HepG2 (cell line): ENCODE measurements at regions of chr12 and their contacts with region 1.

Region 1: DNA sequence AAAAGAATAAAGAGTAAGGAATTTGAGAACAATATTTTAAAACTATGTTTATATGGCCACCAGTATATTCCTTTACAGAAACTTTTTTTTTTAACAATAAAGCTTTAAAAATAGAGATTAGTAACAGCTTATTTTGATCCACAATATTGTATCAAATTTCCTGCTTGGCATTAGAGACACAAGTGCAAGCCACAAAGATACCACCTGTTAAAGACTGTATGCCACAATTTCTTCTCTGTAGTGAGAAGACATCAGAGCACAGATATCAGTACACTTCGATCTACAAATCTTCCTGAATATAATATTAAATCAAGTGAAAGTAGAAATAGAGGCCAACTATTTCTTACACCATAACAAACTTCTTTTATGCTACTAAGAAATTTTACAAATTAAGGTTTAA is 68.0 kb downstream of the GALNT4 start:
- DNase-seq: no peak
- ATAC-seq: no peak
- H3K4me3 ChIP-seq: no peak overlapping the region
- H3K27ac ChIP-seq: no peak overlapping the region
- H3K4me1 ChIP-seq: peaks cover 14% of the 10 kb centered on the region
- H3K27me3 ChIP-seq: no peaks in the 10 kb centered on the region
- CTCF ChIP-seq: no peak
- EP300 ChIP-seq: no peak
- POLR2A ChIP-seq: no peak
- RAD21 ChIP-seq: no peak

Region 2: DNA sequence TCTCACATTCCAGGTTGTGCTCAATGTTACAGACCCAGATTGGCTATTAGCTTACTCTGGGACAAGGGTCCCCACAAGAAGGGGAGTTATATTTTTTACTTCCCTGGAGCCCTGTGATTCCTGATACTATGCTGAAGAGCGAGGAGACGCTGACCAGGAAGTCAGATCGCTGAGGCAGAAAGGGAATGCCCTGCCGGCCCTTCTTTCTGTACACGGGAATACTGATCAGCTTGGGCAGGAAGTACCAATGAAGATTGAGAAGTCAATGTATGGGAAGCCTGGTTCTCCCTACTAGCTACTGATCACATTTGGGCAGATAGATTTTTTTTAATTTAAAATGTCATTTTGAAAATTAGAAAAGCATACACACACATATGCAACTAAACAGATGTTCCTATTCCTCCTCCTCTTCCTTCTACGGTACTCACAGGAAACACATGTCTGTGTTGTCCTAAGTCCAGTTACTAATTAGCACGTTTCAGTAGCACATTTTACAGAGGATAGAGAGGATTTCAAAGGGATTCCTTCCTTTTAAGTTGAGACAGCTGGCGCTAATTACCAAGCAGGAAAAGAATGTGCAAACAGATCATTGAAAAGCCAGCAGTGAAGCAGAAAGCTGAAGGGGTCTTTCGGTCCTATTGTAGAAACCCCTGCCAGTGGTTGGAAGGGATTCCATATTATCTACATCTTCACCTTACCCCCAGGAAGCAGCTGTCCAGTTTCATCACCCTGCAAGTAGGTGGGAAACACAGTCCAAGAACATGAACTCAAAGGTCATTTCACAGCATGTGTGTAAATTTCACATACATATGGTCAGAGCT is 396.6 kb before region 1 on chr12:
- CTCF ChIA-PET with region 1: no interaction called
- POLR2A ChIA-PET with region 1: no interaction called
- in situ Hi-C with region 1: loop called (anchors 5 kb)
- intact Hi-C with region 1: no loop called
- DNase-seq: no peak
- ATAC-seq: peak; percentile 54
- H3K4me3 ChIP-seq: no peak overlapping the region; a peak in 1 of 6 replicates
- H3K27ac ChIP-seq: no peak overlapping the region
- H3K4me1 ChIP-seq: peaks cover 26% of the 10 kb centered on the region
- H3K27me3 ChIP-seq: no peaks in the 10 kb centered on the region
- CTCF ChIP-seq: no peak
- EP300 ChIP-seq: no peak
- POLR2A ChIP-seq: no peak
- RAD21 ChIP-seq: no peak